ENCODE measurements at regions of chr11 and their contacts with region 1.

Region 1: GRCh38 chr11:40306938-40307548 is 1152.4 kb downstream of the LRRC4C start:
- DNase-seq: peak; percentile 11
- ATAC-seq: no peak
- H3K4me3 Mint-ChIP-seq: no peak overlapping the region
- H3K27ac Mint-ChIP-seq: no peak overlapping the region
- H3K4me1 Mint-ChIP-seq: no peaks in the 10 kb centered on the region
- H3K27me3 Mint-ChIP-seq: no peaks in the 10 kb centered on the region

Region 2: GRCh38 chr11:40722179-40722795 is 415.2 kb after region 1 on chr11:
- CTCF ChIA-PET with region 1: no interaction called
- POLR2A ChIA-PET with region 1: no interaction called
- intact Hi-C with region 1: loop called in 1 of 2 experiments (anchors 5 kb)
- DNase-seq: peak; percentile 21
- ATAC-seq: no peak
- H3K4me3 Mint-ChIP-seq: no peak overlapping the region
- H3K27ac Mint-ChIP-seq: no peak overlapping the region
- H3K4me1 Mint-ChIP-seq: no peaks in the 10 kb centered on the region
- H3K27me3 Mint-ChIP-seq: no peaks in the 10 kb centered on the region

Region 3: GRCh38 chr11:41201156-41201555 is 894.1 kb after region 1 on chr11:
- CTCF ChIA-PET with region 1: no interaction called
- POLR2A ChIA-PET with region 1: no interaction called
- intact Hi-C with region 1: loop called (anchors 1 to 10 kb)
- DNase-seq: peak; percentile 45
- ATAC-seq: no peak
- H3K4me3 Mint-ChIP-seq: no peak overlapping the region
- H3K27ac Mint-ChIP-seq: no peak overlapping the region
- H3K4me1 Mint-ChIP-seq: no peaks in the 10 kb centered on the region
- H3K27me3 Mint-ChIP-seq: no peaks in the 10 kb centered on the region

Region 4: GRCh38 chr11:41431784-41432183 is 1124.7 kb after region 1 on chr11:
- CTCF ChIA-PET with region 1: no interaction called
- POLR2A ChIA-PET with region 1: no interaction called
- intact Hi-C with region 1: no loop called
- DNase-seq: no peak
- ATAC-seq: no peak
- H3K4me3 Mint-ChIP-seq: no peak overlapping the region
- H3K27ac Mint-ChIP-seq: no peak overlapping the region
- H3K4me1 Mint-ChIP-seq: no peaks in the 10 kb centered on the region
- H3K27me3 Mint-ChIP-seq: no peaks in the 10 kb centered on the region

Measured in activated CD4-positive, alpha-beta T cell treated with anti-CD3 and anti-CD28 coated beads for 36 hours (primary cell).